Activated CD4-positive, alpha-beta memory T cell treated with anti-CD3 and anti-CD28 coated beads, Interleukin-2, amount 10 ng/mL, durations not matched to agents 7 days and 5 days (primary cell): ENCODE measurements at regions of chr1 and their contacts with region 1.

Region 1: DNA sequence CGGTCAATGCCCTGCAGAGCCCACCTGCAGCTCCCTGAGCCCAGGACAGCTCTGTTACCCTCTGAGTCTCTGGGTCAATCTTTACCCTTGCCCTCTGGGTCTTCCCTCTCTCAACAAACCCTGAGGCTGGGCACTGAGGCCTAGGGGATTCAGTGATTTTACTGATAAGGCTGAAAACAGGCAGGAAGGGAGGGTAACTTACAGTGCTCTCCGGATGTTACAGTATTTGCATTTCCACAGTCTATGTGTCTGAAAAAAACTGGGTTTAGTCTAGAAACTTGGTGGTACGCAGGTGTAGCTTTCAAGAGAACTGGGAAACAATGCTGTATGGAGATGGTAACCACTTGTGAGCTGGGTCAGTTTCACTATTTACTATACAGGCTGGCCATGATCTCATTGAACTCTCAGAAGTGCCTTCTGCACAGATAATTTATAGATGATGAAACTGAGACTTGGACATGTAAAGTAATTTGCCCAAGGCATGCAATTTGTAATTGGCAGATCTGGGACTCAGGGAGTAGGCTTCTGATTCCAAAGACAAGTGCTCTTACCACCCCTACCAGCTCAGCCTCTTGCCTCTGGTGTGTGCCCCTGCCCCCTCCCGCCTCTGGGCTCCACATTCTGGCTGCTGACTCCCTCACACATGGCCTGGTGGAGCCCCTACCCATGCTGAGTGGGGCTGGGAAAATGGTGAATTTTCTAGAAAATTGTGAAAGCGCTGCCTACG is 48.8 kb downstream of the TENT5C start:
- DNase-seq: no peak
- H3K4me3 Mint-ChIP-seq: peak overlapping the region; percentile 29
- H3K27ac Mint-ChIP-seq: peak overlapping the region; percentile 91
- H3K4me1 Mint-ChIP-seq: peaks cover 86% of the 10 kb centered on the region
- H3K27me3 Mint-ChIP-seq: no peaks in the 10 kb centered on the region

Region 2: GRCh38 chr1:117481410-117481809 is 173.2 kb before region 1 on chr1:
- CTCF ChIA-PET with region 1: no interaction called
- POLR2A ChIA-PET with region 1: no interaction called
- DNase-seq: no peak
- H3K4me3 Mint-ChIP-seq: no peak overlapping the region
- H3K27ac Mint-ChIP-seq: no peak overlapping the region
- H3K4me1 Mint-ChIP-seq: no peaks in the 10 kb centered on the region
- H3K27me3 Mint-ChIP-seq: no peaks in the 10 kb centered on the region

Region 3: DNA sequence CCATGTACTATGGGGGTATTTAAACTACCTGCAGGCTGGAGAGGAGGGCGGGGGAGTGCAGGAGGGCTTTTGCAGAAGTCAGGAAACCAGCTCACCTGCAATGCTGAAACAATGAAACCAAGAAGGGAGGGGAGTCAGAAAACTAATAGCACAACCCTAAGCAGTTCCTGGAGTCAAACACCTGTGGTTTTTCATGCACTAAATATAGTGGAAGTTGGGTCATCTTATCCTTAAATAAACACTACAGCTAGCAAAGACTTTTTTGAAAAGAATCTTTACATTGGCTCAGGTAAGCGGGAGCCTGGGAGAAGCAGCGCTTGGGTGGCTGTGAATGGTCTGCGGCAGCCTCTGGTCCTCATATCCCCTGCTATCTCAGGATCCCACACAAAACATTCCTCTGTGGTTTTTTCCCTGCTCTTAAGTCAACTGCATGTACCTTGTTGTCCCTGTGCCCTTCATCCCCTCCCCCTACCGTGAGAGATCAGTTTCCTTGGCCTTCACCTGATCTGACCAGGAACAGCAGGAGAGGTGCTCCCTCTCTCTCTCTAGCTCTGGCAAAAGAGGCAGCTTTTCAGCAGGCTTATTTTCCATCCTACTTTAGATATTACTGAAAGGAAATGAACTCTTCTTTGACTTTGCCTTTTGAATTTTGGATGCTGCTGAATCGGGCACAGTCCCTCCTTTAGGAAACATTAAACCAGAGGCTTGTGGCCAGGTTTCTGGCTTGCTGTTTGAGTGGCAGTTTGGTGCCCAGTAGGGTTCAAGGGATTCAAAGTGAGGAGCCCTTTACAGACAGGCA is 22.2 kb before region 1 on chr1:
- CTCF ChIA-PET with region 1: interaction called, 3 read pairs
- POLR2A ChIA-PET with region 1: interaction called, 20 read pairs
- DNase-seq: no peak
- H3K4me3 Mint-ChIP-seq: no peak overlapping the region
- H3K27ac Mint-ChIP-seq: peak overlapping the region; percentile 67
- H3K4me1 Mint-ChIP-seq: peaks cover 65% of the 10 kb centered on the region
- H3K27me3 Mint-ChIP-seq: no peaks in the 10 kb centered on the region

Region 4: GRCh38 chr1:117695796-117696490 is 41.3 kb after region 1 on chr1:
- CTCF ChIA-PET with region 1: no interaction called
- POLR2A ChIA-PET with region 1: interaction called, 12 read pairs
- DNase-seq: no peak
- H3K4me3 Mint-ChIP-seq: no peak overlapping the region
- H3K27ac Mint-ChIP-seq: no peak overlapping the region
- H3K4me1 Mint-ChIP-seq: peaks cover 26% of the 10 kb centered on the region
- H3K27me3 Mint-ChIP-seq: peaks cover 3% of the 10 kb centered on the region